ENCODE measurements at regions of chr19 and their contacts with region 1.

Region 1: GRCh38 chr19:16893675-16893989 is 4.8 kb downstream of the F2RL3 start:
- DNase-seq: no peak

Region 2: DNA sequence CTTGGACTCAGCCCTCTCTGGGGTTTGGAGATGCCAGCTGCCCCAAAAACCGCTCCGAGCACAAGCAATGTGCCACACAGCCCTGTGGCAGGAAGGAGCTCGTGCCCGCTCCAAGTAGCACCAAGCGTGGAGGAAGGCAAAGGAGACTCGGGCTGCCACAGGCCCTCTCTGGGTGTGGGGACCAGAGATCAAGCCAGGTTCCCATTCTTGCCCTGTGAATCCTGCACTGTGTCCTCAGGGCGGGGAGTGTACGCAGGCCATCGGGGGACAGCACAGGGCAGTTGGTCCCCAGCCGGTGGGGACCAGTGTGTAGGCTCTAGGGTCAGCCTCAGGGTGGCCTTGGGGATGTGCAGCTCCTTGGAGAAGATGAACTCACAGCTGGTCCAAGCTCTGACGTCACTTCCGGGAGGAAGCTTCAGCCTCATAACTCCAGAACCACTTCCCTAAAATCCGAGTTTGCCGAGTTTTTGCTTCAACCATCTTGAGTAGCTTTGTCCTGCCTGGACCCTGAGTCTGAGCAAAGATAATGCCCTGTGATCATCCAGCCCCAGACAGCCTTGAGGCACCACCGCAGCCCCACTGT is 142.3 kb after region 1 on chr19:
- intact Hi-C with region 1: no loop called
- DNase-seq: peak; percentile 88

Region 3: GRCh38 chr19:17879466-17879865 is 985.8 kb after region 1 on chr19:
- intact Hi-C with region 1: loop called in 1 of 2 experiments (anchors 5 kb)
- DNase-seq: no peak

Measured in posterior vena cava (tissue), 2 donors.